ENCODE measurements at regions of chr20 and their contacts with region 1.

Region 1: DNA sequence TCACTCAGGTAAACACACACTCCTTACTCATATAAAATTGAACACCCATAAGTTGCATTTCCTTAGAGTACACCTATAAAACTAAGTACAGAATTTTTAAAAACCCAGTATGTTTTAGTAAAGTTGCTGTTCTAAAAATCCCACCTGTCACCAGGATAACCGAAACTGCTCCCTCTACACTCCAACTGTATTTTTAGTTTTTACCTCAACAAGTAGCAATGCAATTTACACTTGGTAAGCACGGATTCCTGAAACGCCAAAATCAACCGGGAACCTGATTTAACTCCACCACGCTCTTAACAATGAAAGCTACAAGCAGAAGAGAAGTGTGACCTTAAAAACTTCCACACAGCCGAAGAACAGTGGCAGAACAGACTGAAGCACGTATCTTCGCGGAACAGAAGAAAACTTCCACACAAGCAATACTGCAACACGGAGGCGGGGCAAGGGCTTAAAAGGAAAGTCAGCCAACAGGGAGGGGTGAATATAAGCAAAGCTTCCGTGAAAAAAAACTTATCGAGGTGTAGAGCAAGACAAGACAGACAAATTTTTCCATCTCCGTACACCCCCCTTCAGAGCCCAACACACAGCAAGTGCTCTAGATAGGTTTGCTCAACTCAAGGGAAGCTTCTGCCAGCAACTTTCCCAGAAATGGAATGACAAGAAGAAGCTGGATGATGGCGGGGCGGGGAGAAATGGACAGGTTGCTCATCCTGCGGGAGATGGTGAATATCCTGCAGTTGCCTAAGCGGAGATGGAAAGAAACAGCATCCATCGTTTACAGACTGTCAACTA is 1.4 kb downstream of the STAU1 start:
- DNase-seq: peak in 1 of 2 donors; percentile 44
- ATAC-seq: peak in 5 of 8 donors; percentile 10 to 40 (median 30)
- H3K4me3 ChIP-seq: peak overlapping the region; percentile 77 to 96 (median 85)
- H3K27ac ChIP-seq: peak overlapping the region; percentile 40 to 96 (median 94)
- H3K4me1 ChIP-seq: peaks cover 2 to 50% (median 39%) of the 10 kb centered on the region in 9 donors
- H3K27me3 ChIP-seq: no peaks in the 10 kb centered on the region
- CTCF ChIP-seq: no peak

Region 2: GRCh38 chr20:49132995-49133478 is 53.7 kb before region 1 on chr20:
- intact Hi-C with region 1: loop called in 2 of 10 experiments (anchors 10 kb)
- DNase-seq: peak in 1 of 2 donors; percentile 58
- ATAC-seq: peak; percentile 53 to 81 (median 70)
- H3K4me3 ChIP-seq: no peak overlapping the region
- H3K27ac ChIP-seq: peak overlapping the region in 1 of 10 donors; percentile 0
- H3K4me1 ChIP-seq: peaks cover 0 to 10% (median 0%) of the 10 kb centered on the region in 9 donors
- H3K27me3 ChIP-seq: no peaks in the 10 kb centered on the region
- CTCF ChIP-seq: peak; percentile 30 to 75 (median 62)

Region 3: DNA sequence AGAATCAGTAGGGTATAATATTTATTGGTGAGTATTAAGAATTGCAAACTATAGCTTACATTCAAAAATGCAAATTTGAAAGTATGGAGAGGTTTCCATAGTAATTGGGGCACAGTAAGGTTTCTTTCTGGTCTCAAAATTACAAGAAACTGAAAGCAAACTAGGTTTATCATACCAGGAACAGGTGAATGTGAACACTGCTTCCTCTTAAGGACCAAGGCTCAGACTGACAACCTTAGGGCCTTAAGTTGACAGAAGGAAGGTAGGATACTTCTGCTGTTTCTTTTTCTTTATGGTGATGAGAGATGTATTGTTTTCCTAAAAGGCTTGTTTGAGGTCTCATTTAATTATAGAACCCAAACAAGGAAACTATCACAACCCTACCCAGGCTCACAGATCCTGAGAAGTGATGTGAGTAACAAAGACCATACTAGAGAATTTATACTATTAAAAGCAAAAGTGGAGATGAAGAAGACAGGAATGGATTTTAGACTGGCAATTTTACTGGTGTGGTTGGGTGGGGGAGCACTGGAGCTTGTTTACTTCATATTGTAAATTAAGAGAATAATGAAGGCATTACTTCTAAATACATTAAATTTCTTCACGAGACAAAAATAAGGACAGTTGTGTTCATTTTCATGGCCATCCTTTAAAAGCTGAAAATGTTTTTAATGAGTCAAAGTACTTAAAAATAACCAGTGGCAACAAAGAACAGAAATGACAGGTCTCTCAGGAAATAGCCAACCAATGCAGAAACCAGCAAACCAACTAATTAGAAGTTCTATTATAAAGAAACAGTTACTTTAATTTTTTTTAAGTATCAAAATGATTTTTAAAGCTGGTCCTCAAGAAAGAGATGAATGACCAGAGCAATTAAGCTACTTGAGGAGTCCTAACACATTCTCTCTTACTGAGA is 19.9 kb before region 1 on chr20:
- intact Hi-C with region 1: loop called in 1 of 10 experiments (anchors 2 kb)
- DNase-seq: no peak
- ATAC-seq: no peak
- H3K4me3 ChIP-seq: peak overlapping the region in 1 of 10 donors; percentile 13
- H3K27ac ChIP-seq: peak overlapping the region in 5 of 10 donors; percentile 2 to 70 (median 52)
- H3K4me1 ChIP-seq: peaks cover 0 to 39% (median 29%) of the 10 kb centered on the region in 9 donors
- H3K27me3 ChIP-seq: no peaks in the 10 kb centered on the region
- CTCF ChIP-seq: no peak

Region 4: DNA sequence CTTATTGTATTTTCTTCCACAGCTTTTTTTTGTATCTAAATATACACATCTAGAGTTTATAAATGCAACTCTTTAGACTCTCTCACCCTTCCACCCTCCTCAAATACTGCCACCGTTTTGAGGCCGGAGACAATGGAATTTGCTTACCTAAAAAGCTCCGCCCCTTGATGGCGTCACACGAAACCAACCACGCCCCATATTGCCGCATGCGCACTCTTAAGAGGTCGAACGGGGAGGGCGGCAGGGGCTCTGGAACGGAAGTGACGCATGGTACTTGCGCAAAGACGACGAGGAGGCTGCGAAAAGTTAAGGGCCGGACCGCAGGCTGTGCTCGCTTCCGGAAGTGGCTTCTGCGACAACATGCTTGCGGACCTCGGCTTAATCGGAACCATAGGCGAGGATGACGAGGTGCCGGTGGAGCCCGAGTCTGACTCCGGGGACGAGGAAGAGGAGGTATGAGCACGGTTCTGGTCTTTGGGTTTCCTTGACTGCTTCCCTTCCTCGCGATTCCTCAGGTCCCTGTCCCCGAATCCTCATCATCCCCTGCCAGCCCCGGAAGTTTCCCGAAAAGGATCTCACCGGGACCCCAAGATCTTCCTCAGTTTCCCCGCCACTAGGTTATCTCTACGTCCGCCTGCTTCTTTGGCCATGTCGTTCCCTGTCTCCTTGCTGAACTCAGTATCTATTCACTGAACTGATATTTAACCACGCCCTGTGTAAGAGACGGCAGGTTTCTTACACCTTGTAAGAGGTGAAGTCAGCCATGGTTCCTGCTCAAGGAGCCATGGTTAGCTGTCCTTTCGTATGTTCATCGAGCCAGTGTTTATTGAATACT is 32.6 kb after region 1 on chr20 and contains the start of gene DDX27:
- intact Hi-C with region 1: loop called in 3 of 10 experiments (anchors 1 to 2 kb)
- DNase-seq: peak; percentile 95 to 97
- ATAC-seq: peak; percentile 96 to 99 (median 98)
- H3K4me3 ChIP-seq: peak within 1 kb of the TSS; percentile 60 to 92 (median 72)
- H3K27ac ChIP-seq: peak within 1 kb of the TSS; percentile 76 to 95 (median 86)
- H3K4me1 ChIP-seq: peaks cover 2 to 26% (median 12%) of the 10 kb centered on the region in 9 donors
- H3K27me3 ChIP-seq: no peaks in the 10 kb centered on the region
- CTCF ChIP-seq: no peak
- total RNA-seq, gene DDX27: 11.0 to 16.5 (median 12.8) TPM

Region 5: GRCh38 chr20:49245921-49246740 is 59.4 kb after region 1 on chr20:
- intact Hi-C with region 1: no loop called
- DNase-seq: no peak
- ATAC-seq: peak; percentile 40 to 75 (median 62)
- H3K4me3 ChIP-seq: no peak overlapping the region
- H3K27ac ChIP-seq: peak overlapping the region in 2 of 10 donors; percentile 11 to 24
- H3K4me1 ChIP-seq: peaks cover 0 to 39% (median 12%) of the 10 kb centered on the region in 9 donors
- H3K27me3 ChIP-seq: no peaks in the 10 kb centered on the region
- CTCF ChIP-seq: peak; percentile 25 to 65 (median 52)

Region 6: GRCh38 chr20:49278036-49278817 is 91.5 kb after region 1 on chr20 and contains the start of gene ZNFX1:
- intact Hi-C with region 1: loop called in 3 of 10 experiments (anchors 1 to 5 kb)
- DNase-seq: peak; percentile 99
- ATAC-seq: peak; percentile 92 to 98 (median 96)
- H3K4me3 ChIP-seq: peak within 1 kb of the TSS; percentile 70 to 92 (median 86)
- H3K27ac ChIP-seq: peak within 1 kb of the TSS; percentile 87 to 99 (median 97)
- H3K4me1 ChIP-seq: peaks cover 2 to 78% (median 69%) of the 10 kb centered on the region in 9 donors
- H3K27me3 ChIP-seq: no peaks in the 10 kb centered on the region
- CTCF ChIP-seq: peak in 3 of 9 donors; percentile 23 to 27 (median 23)
- total RNA-seq, gene ZNFX1: 18.9 to 49.5 (median 24.8) TPM

Region 7: DNA sequence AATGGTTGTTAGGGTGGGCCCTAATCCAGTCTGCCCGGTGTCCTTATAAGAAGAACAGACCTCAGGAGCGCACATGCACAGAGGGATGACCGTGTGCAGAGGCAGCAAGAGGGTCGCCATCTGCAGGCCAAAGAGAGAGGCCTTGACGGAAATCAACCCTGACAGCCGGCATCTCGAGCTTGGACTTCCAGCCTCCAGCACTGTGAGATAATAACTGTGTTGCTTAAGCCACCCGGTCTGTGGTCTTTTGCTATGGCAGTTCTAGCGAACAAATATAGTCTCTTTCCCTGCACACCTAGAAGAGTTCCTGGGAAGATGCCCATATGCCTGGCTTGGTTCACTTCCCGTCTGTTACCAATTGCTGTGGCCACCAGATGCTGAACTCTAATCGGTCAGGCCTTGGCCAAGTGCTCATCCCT is 416.5 kb after region 1 on chr20:
- intact Hi-C with region 1: no loop called
- DNase-seq: peak in 1 of 2 donors; percentile 37
- ATAC-seq: peak in 7 of 8 donors; percentile 45 to 69 (median 59)
- H3K4me3 ChIP-seq: no peak overlapping the region
- H3K27ac ChIP-seq: peak overlapping the region in 3 of 10 donors; percentile 14 to 44 (median 20)
- H3K4me1 ChIP-seq: peaks cover 0 to 15% (median 0%) of the 10 kb centered on the region in 9 donors
- H3K27me3 ChIP-seq: peaks cover 0 to 9% (median 2%) of the 10 kb centered on the region in 7 donors
- CTCF ChIP-seq: peak in 7 of 9 donors; percentile 24 to 60 (median 37)